ENCODE measurements at regions of chr12 and their contacts with region 1.

Region 1: GRCh38 chr12:30806989-30807694 is 52.4 kb upstream of the CAPRIN2 start:
- DNase-seq: peak; percentile 4
- H3K4me3 Mint-ChIP-seq: no peak overlapping the region
- H3K27ac Mint-ChIP-seq: no peak overlapping the region
- H3K4me1 Mint-ChIP-seq: no peaks in the 10 kb centered on the region
- H3K27me3 Mint-ChIP-seq: peaks cover 10% of the 10 kb centered on the region

Region 2: GRCh38 chr12:29519585-29520182 is 1287.5 kb before region 1 on chr12:
- intact Hi-C with region 1: loop called (anchors 1 kb)
- DNase-seq: no peak
- H3K4me3 Mint-ChIP-seq: no peak overlapping the region
- H3K27ac Mint-ChIP-seq: no peak overlapping the region
- H3K4me1 Mint-ChIP-seq: no peaks in the 10 kb centered on the region
- H3K27me3 Mint-ChIP-seq: peaks cover 5% of the 10 kb centered on the region

Region 3: DNA sequence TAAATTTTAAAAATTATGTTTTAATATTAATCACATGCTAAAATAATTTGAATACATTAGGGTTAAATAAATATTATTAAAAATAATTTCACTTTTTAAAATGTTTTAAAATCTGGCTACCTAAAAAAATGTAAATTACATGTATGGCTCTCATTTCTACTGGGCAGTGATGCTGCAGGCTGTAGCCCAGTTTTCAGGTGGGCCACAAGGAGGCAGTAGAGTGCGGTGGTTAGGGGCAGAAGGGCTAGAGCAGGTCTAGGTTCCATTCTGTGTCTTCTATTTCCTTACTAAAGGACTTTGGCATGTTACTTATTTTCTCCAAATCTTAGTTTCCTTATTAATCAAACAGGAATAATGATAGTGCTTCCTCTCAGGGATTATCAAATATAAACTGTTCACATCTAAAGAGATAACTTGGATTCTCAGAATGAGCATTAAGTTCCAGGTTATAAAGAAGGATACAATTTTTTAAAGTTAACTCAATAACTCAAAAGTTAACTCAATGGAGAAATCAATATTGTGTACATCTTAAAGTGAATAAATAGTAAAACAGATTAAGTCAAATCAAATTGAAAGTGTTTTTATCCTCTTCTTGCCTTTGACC is 1254.7 kb before region 1 on chr12:
- intact Hi-C with region 1: loop called (anchors 1 kb)
- DNase-seq: peak; percentile 41
- H3K4me3 Mint-ChIP-seq: no peak overlapping the region
- H3K27ac Mint-ChIP-seq: no peak overlapping the region
- H3K4me1 Mint-ChIP-seq: no peaks in the 10 kb centered on the region
- H3K27me3 Mint-ChIP-seq: no peaks in the 10 kb centered on the region

Region 4: DNA sequence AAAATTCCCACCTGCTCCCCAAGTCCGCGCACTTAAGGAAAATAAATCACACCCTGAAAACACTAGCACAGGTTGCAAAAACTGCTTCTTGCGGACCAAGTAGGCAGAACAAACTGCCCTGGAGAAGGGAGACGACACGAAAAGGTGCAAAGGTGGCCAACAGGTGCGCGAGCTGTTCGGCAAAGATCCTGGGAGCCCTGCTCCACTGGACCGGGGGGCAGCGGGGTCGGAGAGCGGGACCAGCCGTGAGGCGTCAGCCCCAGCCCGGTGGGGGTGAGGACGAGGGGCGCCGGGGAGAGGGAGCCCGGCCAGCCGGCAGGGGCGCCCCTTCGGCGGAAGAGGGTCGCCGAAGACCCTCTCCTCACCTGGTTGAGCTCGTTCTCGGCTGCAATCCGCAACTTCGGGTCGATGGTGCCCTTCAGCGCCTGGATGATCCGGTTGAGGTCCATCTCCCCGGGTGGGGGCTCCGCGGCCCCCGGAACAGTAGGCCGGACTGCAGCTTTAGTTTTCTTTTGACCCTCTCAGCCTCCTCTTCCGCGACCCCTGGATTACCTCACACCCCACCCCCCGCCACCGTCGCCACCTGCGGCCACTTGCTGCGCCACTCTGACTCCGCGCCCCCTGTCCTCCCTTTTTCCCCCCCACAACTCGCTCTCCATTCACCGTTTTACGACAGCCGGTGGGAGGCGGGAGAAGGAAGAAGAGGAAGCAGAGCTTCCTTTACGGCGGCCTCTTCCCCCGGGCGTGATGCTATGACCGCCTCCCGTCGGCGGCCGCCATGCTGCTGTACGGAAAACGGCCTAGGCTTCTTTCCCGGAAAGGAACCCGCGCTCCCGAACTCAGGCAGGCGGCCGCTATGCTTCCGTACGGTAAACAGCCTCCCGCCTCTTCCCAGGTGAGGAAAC is 111.7 kb before region 1 on chr12 and contains the start of gene IPO8:
- intact Hi-C with region 1: loop called (anchors 5 kb)
- DNase-seq: peak; percentile 80
- H3K4me3 Mint-ChIP-seq: peak within 1 kb of the TSS; percentile 96
- H3K27ac Mint-ChIP-seq: peak within 1 kb of the TSS; percentile 94
- H3K4me1 Mint-ChIP-seq: peaks cover 40% of the 10 kb centered on the region
- H3K27me3 Mint-ChIP-seq: peaks cover 6% of the 10 kb centered on the region
- total RNA-seq, gene IPO8: 41.8 and 50.5 TPM in 2 replicates

Region 5: GRCh38 chr12:31106101-31106803 is 299.1 kb after region 1 on chr12:
- intact Hi-C with region 1: no loop called
- DNase-seq: no peak
- H3K4me3 Mint-ChIP-seq: no peak overlapping the region
- H3K27ac Mint-ChIP-seq: no peak overlapping the region
- H3K4me1 Mint-ChIP-seq: no peaks in the 10 kb centered on the region
- H3K27me3 Mint-ChIP-seq: no peaks in the 10 kb centered on the region